Activated CD4-positive, alpha-beta memory T cell treated with anti-CD3 and anti-CD28 coated beads for 36 hours (primary cell): ENCODE measurements at regions of chr1 and their contacts with region 1.

Region 1: DNA sequence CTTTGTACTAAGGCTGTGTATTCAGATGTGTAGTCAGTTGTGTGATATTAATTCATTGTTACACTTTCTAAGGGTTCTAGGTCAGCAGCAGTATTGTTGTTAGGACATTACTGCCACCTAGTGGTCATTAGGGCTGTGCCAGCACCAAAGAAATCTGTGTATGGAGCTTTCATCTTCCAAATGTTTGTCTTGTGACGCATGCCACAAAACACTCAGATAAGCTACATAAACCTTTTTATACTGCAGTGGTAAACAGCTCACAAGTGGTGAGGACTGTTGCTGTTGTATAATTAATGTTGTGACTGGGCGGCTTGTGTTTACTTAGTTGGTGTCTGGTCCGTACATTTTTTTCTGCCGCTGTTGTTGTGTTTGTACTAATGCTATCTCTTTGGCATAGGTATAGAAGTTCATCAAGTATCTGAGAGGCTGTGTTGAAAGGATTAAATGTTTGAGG is 51.7 kb downstream of the S1PR1 start:
- DNase-seq: peak; percentile 78
- H3K4me3 Mint-ChIP-seq: no peak overlapping the region
- H3K27ac Mint-ChIP-seq: peak overlapping the region; percentile 66
- H3K4me1 Mint-ChIP-seq: peaks cover 80% of the 10 kb centered on the region
- H3K27me3 Mint-ChIP-seq: no peaks in the 10 kb centered on the region

Region 2: DNA sequence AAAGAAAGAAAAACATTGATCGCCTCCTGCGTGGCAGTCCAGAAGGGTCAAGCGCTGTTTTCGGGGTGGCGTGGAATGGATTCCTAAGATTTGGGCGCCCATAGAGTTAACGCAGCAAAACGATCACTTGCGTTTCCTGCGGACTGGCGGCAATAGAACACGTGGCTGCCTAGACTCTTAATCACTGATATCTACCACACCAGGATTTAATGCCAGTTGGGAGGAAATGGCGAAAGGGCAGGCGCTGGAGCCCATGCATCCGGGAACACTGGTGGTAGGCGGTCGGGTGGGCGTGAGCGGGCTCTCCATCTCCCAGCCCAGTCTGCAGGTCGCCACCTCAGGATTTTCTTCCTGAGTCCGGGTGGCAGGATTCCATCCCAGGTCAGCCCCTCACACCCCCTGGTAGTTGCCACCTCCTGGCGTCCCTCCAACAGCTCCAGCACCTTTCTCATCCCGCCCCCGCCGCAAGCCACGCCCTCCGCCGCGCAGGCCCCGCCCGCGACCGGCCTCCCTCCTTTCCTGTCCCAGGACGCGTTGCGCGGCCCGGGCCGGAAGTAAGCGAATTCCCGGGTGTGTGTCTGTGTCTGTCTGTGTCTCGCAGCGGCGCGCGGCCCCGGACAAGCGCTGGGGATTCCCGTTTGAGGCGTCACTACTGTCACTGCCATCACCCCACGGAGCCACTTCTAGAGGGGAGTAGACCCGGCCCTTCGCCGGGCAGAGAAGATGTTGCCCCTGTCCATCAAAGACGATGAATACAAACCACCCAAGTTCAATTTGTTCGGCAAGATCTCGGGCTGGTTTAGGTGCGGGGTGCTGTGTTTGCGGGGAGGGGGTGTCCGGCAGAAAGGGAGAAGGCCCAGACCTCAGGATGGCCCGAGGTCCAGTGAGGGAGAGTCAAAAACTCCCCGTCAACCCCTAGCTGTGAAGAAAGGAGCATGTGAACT is 392.7 kb before region 1 on chr1 and contains the start of gene SLC30A7:
- CTCF ChIA-PET with region 1: interaction called, 31 read pairs
- POLR2A ChIA-PET with region 1: interaction called, 7 read pairs
- intact Hi-C with region 1: loop called (anchors 1 kb)
- DNase-seq: peak; percentile 98
- H3K4me3 Mint-ChIP-seq: peak within 1 kb of the TSS; percentile 99
- H3K27ac Mint-ChIP-seq: peak within 1 kb of the TSS; percentile 100
- H3K4me1 Mint-ChIP-seq: peaks cover 40% of the 10 kb centered on the region
- H3K27me3 Mint-ChIP-seq: no peaks in the 10 kb centered on the region
- total RNA-seq, gene SLC30A7: 40.0 to 43.4 TPM

Region 3: GRCh38 chr1:101004670-101005069 is 283.8 kb before region 1 on chr1:
- CTCF ChIA-PET with region 1: interaction called, 6 read pairs
- POLR2A ChIA-PET with region 1: no interaction called
- intact Hi-C with region 1: loop called (anchors 1 kb)
- DNase-seq: no peak
- H3K4me3 Mint-ChIP-seq: no peak overlapping the region
- H3K27ac Mint-ChIP-seq: no peak overlapping the region
- H3K4me1 Mint-ChIP-seq: peaks cover 56% of the 10 kb centered on the region
- H3K27me3 Mint-ChIP-seq: no peaks in the 10 kb centered on the region

Region 4: DNA sequence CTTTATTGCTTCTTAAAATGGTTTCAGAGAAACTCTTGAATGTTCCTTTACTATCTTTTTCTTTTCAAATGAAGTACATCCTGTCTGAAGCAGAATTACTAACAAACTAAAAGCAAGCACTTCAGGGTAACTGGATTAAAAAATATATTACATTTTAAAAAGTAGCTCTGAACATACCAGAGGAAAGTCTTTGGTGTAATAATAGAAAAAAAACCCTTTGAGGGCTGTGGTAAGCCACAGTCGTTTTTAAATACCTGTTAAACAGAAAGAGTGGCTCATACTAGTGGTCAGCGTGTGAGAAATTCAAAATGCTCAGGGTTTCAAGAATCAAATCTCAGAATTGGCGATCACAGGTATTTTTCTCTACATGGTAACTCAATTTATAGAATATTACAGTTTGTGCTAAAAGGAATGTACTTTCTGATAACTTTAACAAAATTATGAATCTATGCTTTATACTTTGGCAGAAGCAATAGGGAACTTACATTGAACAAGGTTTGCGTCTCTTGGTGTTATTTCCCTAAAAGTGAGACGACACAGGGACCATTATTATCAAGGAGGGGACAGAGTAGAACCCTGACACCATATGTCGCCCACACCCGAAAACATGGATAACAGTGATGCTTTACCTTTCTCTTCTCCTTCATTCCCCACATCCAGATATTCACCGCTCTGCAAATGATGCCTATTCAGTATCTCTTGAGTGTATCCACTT is 165.9 kb before region 1 on chr1:
- CTCF ChIA-PET with region 1: interaction called, 13 read pairs
- POLR2A ChIA-PET with region 1: no interaction called
- intact Hi-C with region 1: loop called (anchors 1 kb)
- DNase-seq: no peak
- H3K4me3 Mint-ChIP-seq: no peak overlapping the region
- H3K27ac Mint-ChIP-seq: peak overlapping the region; percentile 1
- H3K4me1 Mint-ChIP-seq: peaks cover 43% of the 10 kb centered on the region
- H3K27me3 Mint-ChIP-seq: no peaks in the 10 kb centered on the region

Region 5: DNA sequence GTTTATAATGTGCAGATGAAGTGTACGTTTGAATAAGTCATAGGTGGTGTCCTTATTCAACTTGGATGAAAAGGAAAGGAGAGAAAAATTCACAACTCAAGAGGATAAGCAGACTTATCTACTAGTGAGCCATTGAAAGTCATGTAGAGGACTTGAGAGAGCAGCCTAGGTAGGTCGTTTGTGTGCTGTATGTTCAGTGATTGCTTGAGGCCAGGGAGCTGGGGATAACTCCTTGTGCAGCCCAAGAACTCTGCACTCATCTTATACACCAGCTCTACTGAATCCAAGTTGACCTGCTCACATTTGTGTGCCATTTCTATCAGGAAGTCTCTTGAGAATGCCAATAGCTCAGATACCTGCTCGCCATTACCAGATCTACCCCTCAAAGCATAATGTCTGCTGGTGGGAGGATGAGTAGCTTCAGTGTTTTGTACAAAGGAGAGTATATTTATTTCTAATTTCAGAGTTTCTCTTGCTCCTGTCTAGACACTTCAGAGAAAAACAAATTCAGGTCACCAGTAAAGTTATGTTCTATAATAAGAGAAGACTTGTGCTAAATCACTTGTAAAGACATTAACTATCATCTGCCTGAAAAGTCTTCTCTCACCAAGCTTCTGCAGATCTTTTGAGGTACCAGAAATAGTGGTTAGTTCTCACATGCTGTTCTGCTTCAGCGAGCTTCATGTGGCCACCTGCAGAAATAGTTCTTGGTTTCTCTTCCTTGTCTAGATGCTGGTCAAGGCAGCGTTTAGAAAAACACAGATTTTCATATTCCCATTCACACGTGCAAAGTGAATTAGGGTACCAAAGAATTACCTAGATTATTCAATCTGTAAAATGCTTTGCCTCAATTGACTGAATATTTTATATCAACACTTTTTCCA is 40.9 kb before region 1 on chr1:
- CTCF ChIA-PET with region 1: interaction called, 242 read pairs
- POLR2A ChIA-PET with region 1: interaction called, 3 read pairs
- intact Hi-C with region 1: no loop called
- DNase-seq: no peak
- H3K4me3 Mint-ChIP-seq: no peak overlapping the region
- H3K27ac Mint-ChIP-seq: no peak overlapping the region
- H3K4me1 Mint-ChIP-seq: peaks cover 60% of the 10 kb centered on the region
- H3K27me3 Mint-ChIP-seq: no peaks in the 10 kb centered on the region

Region 6: GRCh38 chr1:101309334-101310311 is 21.1 kb after region 1 on chr1:
- CTCF ChIA-PET with region 1: interaction called, 61 read pairs
- POLR2A ChIA-PET with region 1: interaction called, 5 read pairs
- intact Hi-C with region 1: loop called (anchors 1 kb)
- DNase-seq: peak; percentile 77
- H3K4me3 Mint-ChIP-seq: peak overlapping the region; percentile 69
- H3K27ac Mint-ChIP-seq: peak overlapping the region; percentile 78
- H3K4me1 Mint-ChIP-seq: peaks cover 74% of the 10 kb centered on the region
- H3K27me3 Mint-ChIP-seq: no peaks in the 10 kb centered on the region